ENCODE measurements at regions of chr1 and their contacts with region 1.

Region 1: DNA sequence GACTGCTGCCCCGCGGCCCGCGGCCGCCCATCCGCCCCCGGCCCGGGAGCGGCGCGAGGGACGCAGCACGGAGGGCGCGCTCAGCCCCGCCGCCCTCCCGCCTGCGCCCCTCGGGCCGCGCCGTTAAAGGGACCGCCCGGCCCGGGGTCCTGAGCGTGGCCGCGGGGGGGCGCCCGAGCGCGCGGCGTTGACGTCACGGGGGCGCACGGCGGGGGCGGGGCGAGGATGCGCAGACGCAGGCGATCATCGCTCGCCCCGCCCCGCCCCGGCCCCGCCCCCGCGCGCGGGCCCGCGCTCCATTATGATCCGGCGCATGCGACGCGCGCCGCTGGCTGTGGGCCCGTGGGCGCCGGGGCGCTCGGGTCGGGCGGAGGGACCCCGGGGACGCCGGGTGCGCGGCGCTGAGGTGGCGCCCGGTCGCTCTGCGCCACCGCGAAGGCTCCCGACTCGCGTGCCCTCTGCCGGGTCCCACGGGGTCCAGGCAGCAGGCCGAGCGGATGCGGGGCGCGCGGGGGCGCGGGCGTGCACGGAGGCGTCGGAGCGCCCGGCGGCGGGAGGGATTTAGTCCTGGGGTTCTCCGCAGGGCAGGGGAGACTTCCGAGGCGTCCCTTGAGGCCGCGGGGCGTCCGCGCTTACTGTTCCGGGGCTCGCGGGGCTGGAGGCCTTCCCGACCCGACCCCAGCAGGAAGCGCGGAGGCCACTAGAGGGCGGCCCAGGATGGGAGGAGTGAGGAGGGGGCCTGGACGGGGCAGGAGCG is at the start of gene DVL1:
- DNase-seq: peak; percentile 31
- H3K4me3 ChIP-seq: peak within 1 kb of the TSS; percentile 66 to 93 (median 87)
- H3K27ac ChIP-seq: peak within 1 kb of the TSS; percentile 47
- H3K4me1 ChIP-seq: peaks cover 37% of the 10 kb centered on the region
- H3K27me3 ChIP-seq: no peaks in the 10 kb centered on the region
- CTCF ChIP-seq: peak; percentile 17 to 60
- total RNA-seq, gene DVL1: 62.0 to 109 TPM

Region 2: GRCh38 chr1:1033009-1033587 is 316.3 kb before region 1 on chr1:
- CTCF ChIA-PET with region 1: no interaction called
- dilution Hi-C with region 1: no loop called
- in situ Hi-C with region 1: no loop called
- intact Hi-C with region 1: no loop called
- DNase-seq: no peak
- H3K4me3 ChIP-seq: no peak overlapping the region
- H3K27ac ChIP-seq: no peak overlapping the region
- H3K4me1 ChIP-seq: no peaks in the 10 kb centered on the region
- H3K27me3 ChIP-seq: no peaks in the 10 kb centered on the region
- CTCF ChIP-seq: peak; percentile 28 to 48

Region 3: GRCh38 chr1:1173793-1174415 is 175.5 kb before region 1 on chr1 and contains the start of gene TTLL10:
- CTCF ChIA-PET with region 1: no interaction called
- dilution Hi-C with region 1: loop called (anchors 10 kb)
- in situ Hi-C with region 1: no loop called
- intact Hi-C with region 1: no loop called
- DNase-seq: no peak
- H3K4me3 ChIP-seq: no peak within 1 kb of the TSS
- H3K27ac ChIP-seq: no peak within 1 kb of the TSS
- H3K4me1 ChIP-seq: peaks cover 8% of the 10 kb centered on the region
- H3K27me3 ChIP-seq: peaks cover 3% of the 10 kb centered on the region
- CTCF ChIP-seq: no peak
- total RNA-seq, gene TTLL10: not detected

Region 4: DNA sequence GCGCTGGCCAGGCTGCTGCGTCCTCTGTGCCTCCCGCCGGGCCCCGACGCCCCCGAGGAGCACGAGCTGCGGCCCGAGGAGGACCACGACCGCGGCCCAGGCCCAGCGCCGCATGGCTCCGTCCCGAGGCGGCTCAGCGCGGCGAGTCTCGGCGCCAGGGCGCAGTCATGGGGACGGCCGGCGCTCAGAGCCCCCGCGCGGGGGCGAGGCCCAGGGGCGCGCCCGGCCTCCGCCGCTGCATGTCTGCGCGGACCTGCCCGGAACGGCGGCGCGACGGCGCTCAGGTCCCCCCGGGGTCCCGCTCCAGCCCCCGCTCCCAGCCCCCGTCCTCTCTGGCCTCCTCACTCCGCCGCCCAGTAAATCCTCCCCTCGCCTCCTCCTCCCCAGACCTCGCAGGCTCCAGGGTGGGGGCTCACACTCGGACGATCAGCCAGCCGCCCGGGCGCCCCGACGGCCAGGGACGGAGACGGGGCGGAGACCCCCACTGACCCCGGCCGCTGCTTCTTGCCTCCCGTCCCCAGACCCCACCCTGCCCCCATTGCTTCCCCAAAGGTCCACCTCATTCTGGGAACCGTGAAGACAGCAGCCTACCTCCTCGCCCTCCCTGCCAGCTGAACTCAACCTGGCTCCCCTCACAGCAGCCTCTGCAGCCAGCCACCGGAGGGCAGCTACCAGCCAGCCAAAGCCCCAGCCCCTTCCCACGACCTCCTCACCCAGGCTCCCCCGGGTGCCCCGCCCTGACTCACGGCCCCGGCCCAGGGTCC is 102.7 kb before region 1 on chr1 and contains the start of gene C1QTNF12:
- CTCF ChIA-PET with region 1: no interaction called
- dilution Hi-C with region 1: no loop called
- in situ Hi-C with region 1: no loop called
- intact Hi-C with region 1: no loop called
- DNase-seq: no peak
- H3K4me3 ChIP-seq: no peak within 1 kb of the TSS
- H3K27ac ChIP-seq: no peak within 1 kb of the TSS
- H3K4me1 ChIP-seq: peaks cover 10% of the 10 kb centered on the region
- H3K27me3 ChIP-seq: no peaks in the 10 kb centered on the region
- CTCF ChIP-seq: no peak
- total RNA-seq, gene C1QTNF12: 2.7 to 8.8 TPM

Region 5: DNA sequence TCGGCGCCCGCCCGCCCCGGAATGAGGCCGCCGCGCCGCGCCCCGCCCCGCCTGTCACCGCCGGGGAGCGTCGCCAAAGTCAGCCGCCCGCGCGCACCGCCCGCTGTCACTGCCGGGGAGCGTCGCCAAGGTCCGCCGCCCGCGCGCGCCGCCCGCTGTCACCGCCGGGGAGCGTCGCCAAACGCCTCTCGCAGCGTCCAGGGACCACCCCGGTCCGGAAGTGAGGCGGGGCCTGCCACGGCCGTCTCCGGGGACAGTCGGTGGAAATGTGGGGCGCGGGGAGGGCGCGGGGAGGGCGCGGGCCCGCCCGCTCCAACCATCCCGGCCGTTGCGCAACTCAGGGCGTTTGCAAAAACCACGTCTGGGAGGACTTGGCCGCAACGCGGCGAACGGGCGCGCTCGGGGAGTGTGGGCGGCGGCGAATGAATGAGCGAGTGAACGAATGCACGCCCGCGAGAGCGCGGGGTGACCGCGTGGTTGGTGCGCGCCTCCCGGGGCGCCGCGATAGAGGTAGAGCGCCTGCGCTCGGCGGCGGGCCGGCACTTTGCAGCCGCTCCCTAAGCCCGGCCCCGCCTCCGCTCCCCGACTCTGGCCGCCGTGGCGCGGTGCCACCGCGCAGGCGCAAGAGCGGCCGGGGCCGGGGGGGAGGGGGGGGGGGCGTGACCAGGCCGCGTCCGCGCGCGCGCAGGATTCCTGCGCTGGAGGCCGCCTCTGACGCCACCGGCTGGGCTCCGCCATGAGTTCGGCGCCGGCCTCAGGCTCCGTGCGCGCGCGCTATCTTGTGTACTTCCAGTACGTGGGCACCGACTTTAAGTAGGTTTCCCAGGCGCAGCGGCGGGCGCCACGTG is 41.3 kb before region 1 on chr1 and contains the starts of genes ACAP3 and PUSL1:
- CTCF ChIA-PET with region 1: interaction called, 3 read pairs
- dilution Hi-C with region 1: no loop called
- in situ Hi-C with region 1: no loop called
- intact Hi-C with region 1: loop called (anchors 1 kb)
- DNase-seq: peak; percentile 94
- H3K4me3 ChIP-seq: peak within 1 kb of the TSS; percentile 77 to 85 (median 83)
- H3K27ac ChIP-seq: peak within 1 kb of the TSS; percentile 40
- H3K4me1 ChIP-seq: peaks cover 59% of the 10 kb centered on the region
- H3K27me3 ChIP-seq: no peaks in the 10 kb centered on the region
- CTCF ChIP-seq: no peak
- total RNA-seq, gene ACAP3: 16.7 to 32.3 TPM
- total RNA-seq, gene PUSL1: 21.5 to 23.6 TPM

Region 6: GRCh38 chr1:1331068-1331965 is 18.1 kb before region 1 on chr1 and contains the start of gene TAS1R3:
- CTCF ChIA-PET with region 1: no interaction called
- dilution Hi-C with region 1: no loop called
- in situ Hi-C with region 1: no loop called
- intact Hi-C with region 1: no loop called
- DNase-seq: no peak
- H3K4me3 ChIP-seq: no peak within 1 kb of the TSS
- H3K27ac ChIP-seq: no peak within 1 kb of the TSS
- H3K4me1 ChIP-seq: peaks cover 39% of the 10 kb centered on the region
- H3K27me3 ChIP-seq: no peaks in the 10 kb centered on the region
- CTCF ChIP-seq: no peak
- total RNA-seq, gene TAS1R3: under 0.01 TPM in 1 of 2 donors, not detected in the other

Region 7: DNA sequence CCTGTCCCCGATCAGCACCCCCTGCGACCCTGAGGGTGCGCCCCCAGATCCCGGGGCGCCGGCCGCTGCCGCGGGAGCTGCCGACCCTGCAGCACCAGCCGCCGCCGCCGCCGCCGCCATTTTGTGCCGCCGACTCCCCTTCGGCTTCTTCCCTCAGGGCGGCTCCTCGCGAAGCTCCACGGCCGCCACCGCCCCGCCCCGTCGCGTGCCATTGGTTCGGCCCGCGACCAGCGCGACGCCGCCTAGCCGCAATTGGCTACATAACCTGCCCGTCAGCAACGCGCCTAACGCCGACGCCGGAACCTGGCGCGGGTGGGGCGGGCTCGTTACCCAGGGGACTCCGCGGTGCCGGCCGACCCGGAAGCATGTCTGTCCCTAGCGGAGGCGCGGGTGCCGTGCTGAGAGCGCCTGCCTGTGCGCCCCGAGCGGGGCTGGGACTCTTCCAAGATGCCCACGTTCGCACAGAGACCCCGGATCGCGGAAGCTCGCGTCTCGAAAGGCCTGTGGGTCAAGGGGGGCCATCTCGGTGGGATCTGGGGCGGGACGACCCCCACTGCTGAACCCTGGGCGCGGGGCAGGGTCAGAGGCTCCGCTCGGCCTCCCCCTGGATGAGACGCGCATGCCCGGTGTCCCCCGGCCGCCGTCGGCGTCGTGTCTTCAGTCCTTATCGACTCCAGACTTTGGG is 49.9 kb after region 1 on chr1 and contains the start of gene CCNL2:
- CTCF ChIA-PET with region 1: no interaction called
- dilution Hi-C with region 1: no loop called
- in situ Hi-C with region 1: no loop called
- intact Hi-C with region 1: loop called (anchors 2 kb)
- DNase-seq: peak; percentile 98
- H3K4me3 ChIP-seq: peak within 1 kb of the TSS; percentile 88 to 99 (median 95)
- H3K27ac ChIP-seq: peak within 1 kb of the TSS; percentile 62
- H3K4me1 ChIP-seq: peaks cover 30% of the 10 kb centered on the region
- H3K27me3 ChIP-seq: no peaks in the 10 kb centered on the region
- CTCF ChIP-seq: peak; percentile 42 to 69
- total RNA-seq, gene CCNL2: 103 to 140 TPM

Region 8: DNA sequence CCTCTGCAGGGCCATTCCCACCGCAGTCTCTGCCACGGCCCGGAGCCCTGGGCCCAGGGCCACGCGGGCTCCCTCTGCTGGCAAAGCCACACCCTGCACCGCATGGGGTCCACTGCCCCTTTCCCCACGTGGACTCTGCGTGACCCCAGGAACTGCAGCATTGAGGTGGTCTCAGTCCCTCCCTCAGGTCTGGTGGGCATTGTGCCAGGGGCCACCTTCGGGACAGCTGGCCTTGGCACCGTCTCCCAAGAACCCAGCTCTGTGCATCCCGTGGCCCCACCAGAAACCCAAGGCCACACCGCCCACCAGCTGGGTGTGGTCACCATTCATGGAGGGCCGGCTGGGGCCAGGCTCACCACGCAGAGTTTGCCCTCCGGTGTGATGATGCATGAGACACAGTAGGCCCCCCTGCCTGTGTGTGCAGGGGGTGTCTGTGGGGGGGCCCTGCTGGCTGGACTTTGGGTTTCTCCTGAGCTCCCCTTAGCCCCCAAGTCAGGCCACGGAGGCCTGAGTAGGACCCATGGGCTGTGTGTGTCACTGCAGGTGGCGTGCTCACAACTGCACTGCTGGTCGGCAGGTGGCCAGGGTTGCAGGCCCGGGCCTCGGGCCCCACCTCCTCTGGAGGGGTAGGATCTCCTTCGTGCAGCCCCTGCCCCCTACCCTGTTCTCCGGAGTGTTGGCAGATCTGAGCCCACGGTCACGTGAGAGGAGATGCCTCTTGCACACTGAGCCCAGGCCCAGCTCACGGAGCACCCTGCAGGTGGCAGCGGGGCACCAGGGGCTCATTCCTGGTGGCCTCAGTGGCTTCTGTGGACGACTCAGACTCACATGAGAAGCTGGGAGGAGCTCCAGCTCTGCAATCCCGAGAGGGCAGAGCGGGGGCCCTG is 91.8 kb after region 1 on chr1:
- CTCF ChIA-PET with region 1: no interaction called
- dilution Hi-C with region 1: no loop called
- in situ Hi-C with region 1: no loop called
- intact Hi-C with region 1: loop called (anchors 5 kb)
- DNase-seq: no peak
- H3K4me3 ChIP-seq: no peak overlapping the region
- H3K27ac ChIP-seq: no peak overlapping the region
- H3K4me1 ChIP-seq: peaks cover 13% of the 10 kb centered on the region
- H3K27me3 ChIP-seq: no peaks in the 10 kb centered on the region
- CTCF ChIP-seq: peak; percentile 81 to 93

Region 9: GRCh38 chr1:1507305-1507704 is 157.9 kb after region 1 on chr1:
- CTCF ChIA-PET with region 1: no interaction called
- dilution Hi-C with region 1: no loop called
- in situ Hi-C with region 1: no loop called
- intact Hi-C with region 1: loop called (anchors 5 kb)
- DNase-seq: no peak
- H3K4me3 ChIP-seq: no peak overlapping the region
- H3K27ac ChIP-seq: no peak overlapping the region
- H3K4me1 ChIP-seq: peaks cover 16% of the 10 kb centered on the region
- H3K27me3 ChIP-seq: no peaks in the 10 kb centered on the region
- CTCF ChIP-seq: no peak